Activated CD4-positive, alpha-beta T cell treated with anti-CD3 and anti-CD28 coated beads, Interleukin-2, amount 10 ng/mL, durations not matched to agents 7 days and 5 days (primary cell): ENCODE measurements at regions of chr3 and their contacts with region 1.

Region 1: DNA sequence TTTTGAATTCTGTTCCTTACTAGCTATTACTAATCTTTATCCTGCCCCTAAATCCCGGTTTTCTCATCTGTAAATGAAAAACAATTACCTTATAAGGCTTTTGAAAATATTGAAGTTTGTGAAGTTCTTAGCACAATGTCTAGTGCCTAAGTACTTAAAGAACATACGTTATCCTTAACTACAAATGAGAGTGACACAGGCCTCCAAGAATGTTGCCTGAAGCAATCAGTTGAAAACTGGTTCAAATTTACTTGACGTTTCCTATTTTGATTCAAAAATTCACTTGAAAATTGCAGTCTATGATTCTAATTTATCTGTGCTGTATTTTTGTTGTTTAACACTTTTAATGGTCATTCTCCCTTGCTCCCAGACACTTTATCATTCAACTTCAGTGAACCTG is 3.2 kb downstream of the SENP7 start:
- DNase-seq: no peak
- H3K4me3 Mint-ChIP-seq: no peak overlapping the region
- H3K27ac Mint-ChIP-seq: no peak overlapping the region
- H3K4me1 Mint-ChIP-seq: peaks cover 56% of the 10 kb centered on the region
- H3K27me3 Mint-ChIP-seq: no peaks in the 10 kb centered on the region

Region 2: GRCh38 chr3:100602506-100603444 is 907.0 kb before region 1 on chr3:
- CTCF ChIA-PET with region 1: no interaction called
- POLR2A ChIA-PET with region 1: interaction called, 13 read pairs
- DNase-seq: no peak
- H3K4me3 Mint-ChIP-seq: peak overlapping the region; percentile 63
- H3K27ac Mint-ChIP-seq: peak overlapping the region; percentile 81
- H3K4me1 Mint-ChIP-seq: peaks cover 53% of the 10 kb centered on the region
- H3K27me3 Mint-ChIP-seq: peaks cover 17% of the 10 kb centered on the region

Region 3: DNA sequence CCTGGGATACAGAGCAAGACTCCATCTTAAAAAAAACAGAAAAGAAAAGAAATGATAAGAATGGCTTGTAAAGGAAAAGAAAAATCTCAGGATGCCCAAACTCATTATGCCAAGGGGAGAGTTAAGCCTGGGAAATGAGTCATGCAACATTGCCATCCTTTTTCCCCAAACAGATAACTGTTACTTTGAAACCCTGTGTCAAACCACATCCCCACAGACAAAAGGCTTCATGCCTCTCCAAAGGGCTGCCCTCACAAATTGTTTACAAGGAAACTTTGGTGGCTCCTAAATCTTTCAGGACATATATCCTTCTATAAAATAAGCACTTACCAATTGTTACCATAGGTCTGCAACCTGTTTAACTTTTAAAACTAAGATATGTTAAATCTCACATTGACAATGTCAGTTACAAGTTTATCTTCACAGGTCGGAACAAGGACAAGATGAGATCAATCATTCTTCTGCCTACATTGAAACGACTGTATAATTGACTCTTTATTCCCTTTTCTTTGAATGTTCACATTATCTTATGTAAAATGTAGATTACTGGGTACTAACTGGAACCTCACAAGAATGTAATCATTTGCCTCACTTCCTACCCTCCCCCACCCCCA is 21.8 kb after region 1 on chr3:
- CTCF ChIA-PET with region 1: no interaction called
- POLR2A ChIA-PET with region 1: no interaction called
- DNase-seq: peak; percentile 29
- H3K4me3 Mint-ChIP-seq: no peak overlapping the region
- H3K27ac Mint-ChIP-seq: peak overlapping the region; percentile 42
- H3K4me1 Mint-ChIP-seq: peaks cover 35% of the 10 kb centered on the region
- H3K27me3 Mint-ChIP-seq: no peaks in the 10 kb centered on the region